AG04450 (cell line): ENCODE measurements at regions of chr7 and their contacts with region 1.

Region 1: DNA sequence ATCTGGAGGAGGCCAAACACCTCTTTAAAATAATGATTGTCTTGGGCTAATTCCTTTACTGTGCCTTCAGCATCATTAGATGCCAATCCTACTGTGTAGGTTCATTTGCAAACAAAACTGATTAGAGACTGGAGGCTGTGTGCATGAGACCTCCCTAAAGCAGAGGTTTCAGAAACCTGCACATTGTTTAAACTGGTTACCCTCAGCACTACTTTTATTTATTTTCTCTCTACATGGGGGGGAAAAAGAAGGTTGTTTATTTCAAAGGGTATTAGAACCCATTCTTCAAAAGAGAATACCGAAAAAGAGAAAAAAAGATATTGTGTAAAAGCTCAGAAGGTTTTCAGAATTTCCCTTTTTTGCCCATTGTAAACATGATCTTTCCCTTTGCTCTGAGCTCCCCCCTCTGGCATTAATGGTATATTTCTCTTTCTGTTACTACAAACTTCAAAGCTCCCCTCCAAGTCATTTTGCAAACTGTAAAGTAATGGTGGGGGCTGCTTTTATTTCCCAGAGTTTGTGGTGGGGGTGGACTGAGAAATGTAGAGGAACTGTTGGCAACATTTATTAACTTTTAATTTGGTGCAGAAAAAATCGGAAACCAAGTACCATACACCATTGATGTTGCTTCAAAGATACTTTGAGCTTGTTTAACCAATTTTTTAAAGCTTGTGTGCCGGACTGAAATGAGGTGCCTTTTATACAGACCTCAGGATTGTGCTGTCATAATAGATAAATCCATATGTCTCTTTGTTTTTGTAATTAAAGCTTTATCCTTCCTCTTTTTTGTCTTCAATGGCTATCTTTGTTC is 181.4 kb downstream of the EXOC4 start:
- DNase-seq: no peak
- H3K4me3 ChIP-seq: no peak overlapping the region
- H3K27ac ChIP-seq: no peak overlapping the region
- H3K27me3 ChIP-seq: no peaks in the 10 kb centered on the region
- CTCF ChIP-seq: peak; percentile 70

Region 2: DNA sequence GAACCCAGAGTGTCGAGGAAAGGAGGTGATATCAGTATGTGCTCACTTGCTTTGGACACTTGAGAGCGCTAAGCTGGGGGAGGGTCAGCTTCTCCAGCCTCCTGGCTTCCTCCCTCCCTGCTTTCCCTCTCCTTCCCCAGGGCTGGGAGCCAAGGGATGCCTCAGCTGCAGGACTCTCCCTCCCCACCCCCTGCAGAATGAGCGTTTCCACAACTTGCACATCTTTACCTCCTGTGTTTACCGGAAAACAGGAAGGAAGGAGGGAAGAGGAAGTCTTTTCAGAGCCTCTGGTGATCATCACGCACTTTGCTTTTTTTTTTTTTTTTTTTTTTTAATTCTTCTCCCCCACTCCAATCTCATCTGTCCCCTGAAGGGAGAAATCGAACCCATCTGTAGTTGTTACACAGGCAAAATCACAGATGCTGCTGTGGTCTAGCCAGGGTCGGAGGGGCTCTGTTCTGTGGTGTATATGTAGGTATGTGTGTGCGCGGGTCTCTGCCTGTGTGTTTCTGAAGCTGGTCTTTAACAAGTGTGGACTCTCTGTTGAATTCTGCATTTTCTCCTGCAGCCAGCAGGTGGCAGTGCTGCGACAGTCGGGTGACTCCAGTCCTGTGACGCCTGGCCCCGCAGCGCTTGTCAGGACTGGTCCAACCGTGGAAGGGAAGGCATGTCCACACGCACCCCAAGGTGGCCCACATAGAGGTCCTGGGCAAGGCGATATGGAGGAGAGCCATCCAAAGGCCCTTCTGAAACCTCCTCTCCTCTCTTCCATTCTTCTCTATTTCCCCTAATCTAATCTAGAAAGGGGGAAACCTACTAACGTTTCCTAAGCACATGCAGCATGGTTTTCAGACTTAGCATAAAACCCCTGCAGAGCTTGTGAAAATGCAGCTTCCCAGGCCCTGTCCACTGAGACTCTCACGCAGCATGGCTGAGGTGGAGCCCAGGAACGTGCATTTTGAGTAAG is 1115.6 kb before region 1 on chr7:
- CTCF ChIA-PET with region 1: interaction called, 10 read pairs
- POLR2A ChIA-PET with region 1: no interaction called
- DNase-seq: peak; percentile 67
- H3K4me3 ChIP-seq: no peak overlapping the region
- H3K27ac ChIP-seq: no peak overlapping the region
- H3K27me3 ChIP-seq: no peaks in the 10 kb centered on the region
- CTCF ChIP-seq: peak; percentile 90

Region 3: GRCh38 chr7:132580717-132581285 is 853.5 kb before region 1 on chr7:
- CTCF ChIA-PET with region 1: interaction called, 11 read pairs
- POLR2A ChIA-PET with region 1: interaction called, 3 read pairs
- DNase-seq: peak; percentile 36
- H3K4me3 ChIP-seq: no peak overlapping the region
- H3K27ac ChIP-seq: no peak overlapping the region
- H3K27me3 ChIP-seq: peaks cover 29% of the 10 kb centered on the region
- CTCF ChIP-seq: peak; percentile 75

Region 4: DNA sequence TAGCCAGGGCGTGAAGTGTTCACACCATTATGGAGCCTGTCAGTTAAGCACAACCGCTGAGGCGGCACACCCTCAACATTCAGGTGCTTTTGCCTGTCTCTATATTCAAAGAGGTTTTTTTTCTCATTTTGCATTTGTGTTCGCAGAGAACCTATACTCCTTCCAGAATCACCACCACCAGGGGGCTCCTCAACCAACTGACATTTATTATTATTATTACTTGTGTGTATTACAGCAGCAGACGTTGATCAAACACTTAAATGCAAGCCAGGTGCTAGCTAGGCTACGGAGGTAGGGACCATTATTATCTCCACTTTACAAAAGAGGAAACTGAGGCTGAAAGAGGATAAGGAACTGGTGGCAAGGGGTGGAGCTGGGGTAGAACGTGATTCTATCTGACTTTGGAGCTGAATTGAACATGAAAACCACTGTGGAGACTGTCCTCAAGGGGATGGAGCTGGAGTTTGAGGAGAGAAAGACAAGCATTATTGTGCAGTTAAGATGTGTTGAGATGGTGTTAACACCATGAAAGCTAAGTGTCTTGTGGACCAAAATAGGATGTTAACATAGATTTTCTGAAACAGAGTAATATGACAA is 724.2 kb before region 1 on chr7:
- CTCF ChIA-PET with region 1: interaction called, 48 read pairs
- POLR2A ChIA-PET with region 1: no interaction called
- DNase-seq: peak; percentile 4
- H3K4me3 ChIP-seq: no peak overlapping the region
- H3K27ac ChIP-seq: no peak overlapping the region
- H3K27me3 ChIP-seq: peaks cover 5% of the 10 kb centered on the region
- CTCF ChIP-seq: peak; percentile 68

Region 5: GRCh38 chr7:133003052-133003910 is 431.0 kb before region 1 on chr7:
- CTCF ChIA-PET with region 1: no interaction called
- POLR2A ChIA-PET with region 1: no interaction called
- DNase-seq: no peak
- H3K4me3 ChIP-seq: no peak overlapping the region
- H3K27ac ChIP-seq: no peak overlapping the region
- H3K27me3 ChIP-seq: no peaks in the 10 kb centered on the region
- CTCF ChIP-seq: no peak

Region 6: GRCh38 chr7:133613250-133613790 is 179.1 kb after region 1 on chr7:
- CTCF ChIA-PET with region 1: no interaction called
- POLR2A ChIA-PET with region 1: no interaction called
- DNase-seq: no peak
- H3K4me3 ChIP-seq: no peak overlapping the region
- H3K27ac ChIP-seq: no peak overlapping the region
- H3K27me3 ChIP-seq: no peaks in the 10 kb centered on the region
- CTCF ChIP-seq: no peak

Region 7: DNA sequence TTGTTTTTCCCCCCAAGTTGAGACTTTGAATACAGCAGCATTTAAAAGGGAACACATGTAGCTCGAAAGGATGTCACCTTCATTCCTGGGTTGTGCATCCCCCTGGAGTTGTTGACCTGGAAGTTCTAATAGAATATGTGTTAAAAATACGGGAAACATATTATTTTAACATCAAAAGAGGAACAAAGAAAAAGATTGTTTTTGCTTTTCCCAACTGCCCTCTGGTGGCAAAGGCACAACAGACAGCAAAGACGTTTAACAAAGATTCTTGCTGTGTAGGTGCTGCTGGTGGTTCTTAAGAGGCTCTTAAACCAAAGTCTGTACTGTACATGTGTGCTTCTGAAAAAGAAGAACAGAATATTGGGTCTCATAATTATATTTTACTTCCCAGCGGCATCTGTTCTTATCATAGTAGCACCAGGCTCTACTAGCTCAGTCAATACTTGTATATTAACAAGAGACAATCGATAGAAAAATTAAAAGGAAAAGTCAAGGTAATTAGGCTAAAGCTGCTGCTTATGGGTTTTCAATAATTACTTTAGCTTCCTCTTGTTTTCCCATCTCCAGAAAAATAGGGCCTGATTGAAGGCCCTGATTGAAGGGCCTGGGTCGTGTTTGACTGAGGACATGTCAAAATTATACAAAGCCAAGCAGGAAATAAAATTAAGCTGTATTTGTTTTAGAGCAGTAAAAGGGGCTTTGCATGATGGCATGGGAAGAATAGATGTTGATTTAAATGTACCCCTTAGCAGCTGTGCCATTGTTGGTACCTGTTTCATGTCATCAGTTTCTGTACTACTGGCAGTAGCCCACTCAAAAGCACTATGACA is 308.7 kb after region 1 on chr7:
- CTCF ChIA-PET with region 1: interaction called, 27 read pairs
- POLR2A ChIA-PET with region 1: no interaction called
- DNase-seq: no peak
- H3K4me3 ChIP-seq: no peak overlapping the region
- H3K27ac ChIP-seq: no peak overlapping the region
- H3K27me3 ChIP-seq: no peaks in the 10 kb centered on the region
- CTCF ChIP-seq: peak; percentile 74

Region 8: GRCh38 chr7:133853706-133854276 is 419.5 kb after region 1 on chr7:
- CTCF ChIA-PET with region 1: interaction called, 29 read pairs
- POLR2A ChIA-PET with region 1: no interaction called
- DNase-seq: peak; percentile 61
- H3K4me3 ChIP-seq: no peak overlapping the region
- H3K27ac ChIP-seq: peak overlapping the region; percentile 85
- H3K27me3 ChIP-seq: no peaks in the 10 kb centered on the region
- CTCF ChIP-seq: peak; percentile 51

Region 9: GRCh38 chr7:134420424-134421125 is 986.3 kb after region 1 on chr7:
- CTCF ChIA-PET with region 1: interaction called, 10 read pairs
- POLR2A ChIA-PET with region 1: no interaction called
- DNase-seq: peak; percentile 7
- H3K4me3 ChIP-seq: no peak overlapping the region
- H3K27ac ChIP-seq: no peak overlapping the region
- H3K27me3 ChIP-seq: peaks cover 14% of the 10 kb centered on the region
- CTCF ChIP-seq: peak; percentile 65